ENCODE measurements at regions of chr5 and their contacts with region 1.

Region 1: DNA sequence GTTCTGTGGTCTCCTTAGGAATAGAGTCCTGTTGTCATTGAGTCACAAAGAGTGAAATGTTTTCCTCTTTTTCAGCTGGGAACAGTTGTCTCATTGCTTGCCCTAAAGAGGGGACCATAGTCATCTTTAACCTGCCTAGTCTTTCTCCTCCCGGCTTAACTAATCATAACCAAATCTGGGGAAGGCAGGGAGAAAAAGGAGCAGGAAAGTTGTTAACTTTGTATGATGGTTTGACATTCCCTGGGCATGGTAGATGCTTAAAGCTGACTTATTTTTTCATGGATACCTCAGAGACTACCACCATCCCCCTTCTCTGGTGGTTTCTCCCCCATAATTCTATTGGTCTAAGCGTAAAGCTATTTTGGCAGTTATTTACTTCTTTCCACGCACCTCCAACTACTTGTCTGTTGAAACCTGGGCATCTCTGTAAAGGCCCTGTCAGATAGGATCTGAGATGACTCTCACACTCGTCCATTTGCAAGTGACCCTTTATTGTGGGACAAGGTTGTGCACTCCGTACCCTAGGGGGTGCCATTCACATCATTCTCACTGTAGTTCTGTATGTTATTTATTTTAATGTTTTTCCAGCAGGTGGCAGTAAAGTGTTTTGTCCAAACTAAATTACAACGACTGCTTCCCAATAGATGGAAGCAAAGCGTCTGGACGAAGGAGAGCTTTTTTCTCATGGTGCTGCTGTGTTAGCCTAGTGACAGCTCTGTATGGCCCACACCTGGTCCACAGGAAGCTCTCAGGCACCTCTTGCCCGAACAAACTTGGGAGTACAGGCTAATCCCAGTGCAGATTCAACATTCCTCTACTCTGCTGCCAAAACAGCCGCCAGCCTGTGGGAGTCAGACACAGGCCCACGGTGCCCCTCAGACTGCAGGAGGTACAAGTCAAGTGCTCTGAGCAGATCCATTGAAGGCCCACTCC is 3.0 kb upstream of the FAM13B start:
- DNase-seq: peak; percentile 90
- ATAC-seq: peak; percentile 72
- H3K4me3 ChIP-seq: no peak overlapping the region
- H3K27ac ChIP-seq: no peak overlapping the region
- H3K4me1 ChIP-seq: peaks cover 12 to 34% of the 10 kb centered on the region in 2 experiments
- H3K27me3 ChIP-seq: no peaks in the 10 kb centered on the region
- CTCF ChIP-seq: peak; percentile 78 to 99 (median 98)
- POLR2A ChIP-seq: no peak
- RAD21 ChIP-seq: peak; percentile 90

Region 2: GRCh38 chr5:137754126-137754960 is 281.5 kb before region 1 on chr5 and contains the start of gene HNRNPA0:
- CTCF ChIA-PET with region 1: no interaction called
- POLR2A ChIA-PET with region 1: no interaction called
- RAD21 ChIA-PET with region 1: no interaction called
- intact Hi-C with region 1: loop called (anchors 2 kb)
- DNase-seq: peak; percentile 95
- ATAC-seq: peak; percentile 89
- H3K4me3 ChIP-seq: peak within 1 kb of the TSS; percentile 87 to 97
- H3K27ac ChIP-seq: peak within 1 kb of the TSS; percentile 91
- H3K4me1 ChIP-seq: peaks cover 0 to 20% of the 10 kb centered on the region in 2 experiments; a peak in 2 of 4 replicates
- H3K27me3 ChIP-seq: no peaks in the 10 kb centered on the region
- CTCF ChIP-seq: no peak
- POLR2A ChIP-seq: peak; percentile 89
- RAD21 ChIP-seq: no peak
- total RNA-seq, gene HNRNPA0: 38.9 TPM

Region 3: GRCh38 chr5:138065102-138065501 is 29.2 kb after region 1 on chr5:
- CTCF ChIA-PET with region 1: interaction called, 13 read pairs
- POLR2A ChIA-PET with region 1: no interaction called
- RAD21 ChIA-PET with region 1: interaction called in 1 of 2 experiments, 4 read pairs
- intact Hi-C with region 1: loop called (anchors 1 kb)
- DNase-seq: no peak
- ATAC-seq: peak; percentile 74
- H3K4me3 ChIP-seq: no peak overlapping the region
- H3K27ac ChIP-seq: no peak overlapping the region
- H3K4me1 ChIP-seq: no peaks in the 10 kb centered on the region
- H3K27me3 ChIP-seq: no peaks in the 10 kb centered on the region
- CTCF ChIP-seq: peak; percentile 49 to 72 (median 62); a peak in 5 of 6 replicates
- POLR2A ChIP-seq: no peak
- RAD21 ChIP-seq: peak; percentile 32